Mammary epithelial cell (primary cell): ENCODE measurements at regions of chr4 and their contacts with region 1.

Region 1: DNA sequence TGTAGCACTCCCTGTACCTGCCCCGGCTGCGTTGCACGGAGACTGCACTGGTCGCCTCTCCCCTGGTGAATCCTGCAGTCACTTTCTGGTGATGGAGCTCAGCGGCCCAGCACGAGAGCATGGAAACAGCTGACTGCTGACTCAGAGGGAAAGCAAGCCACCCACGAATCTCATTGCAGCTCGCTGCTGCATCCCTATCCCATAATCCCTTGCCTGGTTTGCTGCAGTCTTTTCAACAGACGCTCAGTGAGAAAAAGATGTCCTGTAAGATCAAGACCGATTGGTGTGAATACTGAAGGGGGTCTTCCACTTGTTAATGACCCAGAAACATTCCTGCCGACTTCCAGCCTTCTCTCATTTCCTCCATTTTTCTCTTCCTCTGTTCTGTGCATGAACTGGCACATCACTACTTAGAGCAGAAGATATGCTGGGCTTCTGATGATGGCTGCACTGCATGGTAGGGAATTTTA is 52.9 kb downstream of the TRIM2 start:
- DNase-seq: no peak
- H3K4me3 ChIP-seq: no peak overlapping the region
- H3K27ac ChIP-seq: no peak overlapping the region
- H3K4me1 ChIP-seq: peaks cover under 1% of the 10 kb centered on the region
- H3K27me3 ChIP-seq: no peaks in the 10 kb centered on the region
- CTCF ChIP-seq: no peak

Region 2: DNA sequence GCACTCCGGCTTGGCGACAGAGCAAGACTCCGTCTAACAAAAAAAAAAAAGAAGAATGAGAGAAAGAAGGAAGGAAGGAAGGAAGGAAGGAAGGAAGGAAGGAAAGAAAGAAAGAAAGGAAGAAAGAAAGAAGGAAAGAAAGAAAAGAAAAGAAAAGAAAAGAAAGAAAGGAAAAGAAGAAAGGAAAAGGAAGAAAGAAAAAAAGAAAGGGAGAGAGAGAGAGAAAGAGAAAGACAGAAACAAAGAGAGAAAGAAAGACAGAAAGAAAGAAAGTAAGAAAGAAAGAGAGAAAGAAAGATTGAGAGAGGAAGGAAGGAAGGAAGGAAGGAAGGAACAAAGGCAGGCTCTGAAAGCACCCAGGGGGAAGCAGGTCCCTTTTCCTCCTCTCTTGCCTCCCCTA is 1159.8 kb before region 1 on chr4:
- CTCF ChIA-PET with region 1: interaction called, 12 read pairs
- dilution Hi-C with region 1: no loop called
- in situ Hi-C with region 1: no loop called
- intact Hi-C with region 1: no loop called
- DNase-seq: no peak
- H3K4me3 ChIP-seq: no peak overlapping the region
- H3K27ac ChIP-seq: no peak overlapping the region
- H3K4me1 ChIP-seq: peaks cover 22% of the 10 kb centered on the region
- H3K27me3 ChIP-seq: no peaks in the 10 kb centered on the region
- CTCF ChIP-seq: no peak

Region 3: GRCh38 chr4:153274967-153275366 is 17.8 kb after region 1 on chr4:
- CTCF ChIA-PET with region 1: no interaction called
- dilution Hi-C with region 1: no loop called
- in situ Hi-C with region 1: no loop called
- intact Hi-C with region 1: no loop called
- DNase-seq: peak; percentile 43
- H3K4me3 ChIP-seq: no peak overlapping the region
- H3K27ac ChIP-seq: no peak overlapping the region
- H3K4me1 ChIP-seq: peaks cover 4% of the 10 kb centered on the region
- H3K27me3 ChIP-seq: no peaks in the 10 kb centered on the region
- CTCF ChIP-seq: no peak

Region 4: GRCh38 chr4:153310793-153311192 is 53.6 kb after region 1 on chr4:
- CTCF ChIA-PET with region 1: no interaction called
- dilution Hi-C with region 1: no loop called
- in situ Hi-C with region 1: no loop called
- intact Hi-C with region 1: no loop called
- DNase-seq: no peak
- H3K4me3 ChIP-seq: no peak overlapping the region
- H3K27ac ChIP-seq: no peak overlapping the region
- H3K4me1 ChIP-seq: no peaks in the 10 kb centered on the region
- H3K27me3 ChIP-seq: no peaks in the 10 kb centered on the region
- CTCF ChIP-seq: no peak